OCI-LY7 (cell line): ENCODE measurements at regions of chr4 and their contacts with region 1.

Region 1: DNA sequence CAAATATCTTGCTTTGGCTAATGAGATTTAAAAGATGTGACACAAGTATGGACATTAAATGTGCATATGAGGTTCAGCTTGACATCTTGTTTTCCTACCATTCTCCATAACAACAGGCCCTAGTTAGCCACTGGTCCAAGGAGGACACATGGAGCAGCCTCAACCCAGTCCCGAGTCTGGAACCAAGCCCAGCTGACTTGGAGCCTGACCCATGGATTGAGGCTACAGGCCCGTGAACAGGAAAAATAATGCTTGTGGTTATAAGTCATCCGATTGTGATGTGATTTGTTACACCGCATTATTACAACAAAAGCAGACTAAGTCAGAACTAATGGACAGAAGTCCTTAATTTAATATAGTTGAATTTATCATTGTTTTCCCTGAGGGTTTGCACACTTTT is 123.2 kb upstream of the BANK1 start:
- DNase-seq: no peak
- H3K4me3 ChIP-seq: no peak overlapping the region
- H3K27ac ChIP-seq: no peak overlapping the region
- H3K4me1 ChIP-seq: no peaks in the 10 kb centered on the region
- CTCF ChIP-seq: no peak

Region 2: GRCh38 chr4:101500742-101501141 is 166.6 kb before region 1 on chr4:
- CTCF ChIA-PET with region 1: no interaction called
- POLR2A ChIA-PET with region 1: no interaction called
- intact Hi-C with region 1: no loop called
- DNase-seq: no peak
- H3K4me3 ChIP-seq: no peak overlapping the region
- H3K27ac ChIP-seq: no peak overlapping the region
- H3K4me1 ChIP-seq: no peaks in the 10 kb centered on the region
- CTCF ChIP-seq: no peak

Region 3: DNA sequence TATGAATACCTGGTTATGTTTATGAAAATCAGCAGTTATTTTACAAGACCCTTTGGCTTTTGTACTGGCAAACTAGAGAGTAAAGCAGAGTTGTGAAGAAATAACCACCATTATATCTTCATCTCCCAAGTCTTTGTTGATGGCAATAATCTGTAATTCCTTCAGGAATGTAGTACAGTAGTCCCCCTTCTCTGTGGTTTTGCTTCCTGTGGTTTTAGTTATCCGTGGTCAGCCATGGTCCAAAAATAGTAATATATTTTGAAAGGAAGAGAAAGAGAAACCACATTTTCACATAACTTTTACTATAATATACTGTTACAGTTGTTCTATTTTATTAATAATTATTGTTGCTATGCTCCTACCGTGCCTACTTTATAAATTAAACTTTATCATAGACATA is 151.0 kb after region 1 on chr4:
- CTCF ChIA-PET with region 1: no interaction called
- POLR2A ChIA-PET with region 1: no interaction called
- intact Hi-C with region 1: no loop called
- DNase-seq: no peak
- H3K4me3 ChIP-seq: no peak overlapping the region
- H3K27ac ChIP-seq: no peak overlapping the region
- H3K4me1 ChIP-seq: no peaks in the 10 kb centered on the region
- CTCF ChIP-seq: no peak

Region 4: GRCh38 chr4:103289186-103289585 is 1621.8 kb after region 1 on chr4:
- CTCF ChIA-PET with region 1: no interaction called
- POLR2A ChIA-PET with region 1: interaction called, 11 read pairs
- intact Hi-C with region 1: no loop called
- DNase-seq: no peak
- H3K4me3 ChIP-seq: no peak overlapping the region
- H3K27ac ChIP-seq: no peak overlapping the region
- H3K4me1 ChIP-seq: no peaks in the 10 kb centered on the region
- CTCF ChIP-seq: no peak